GM10248 (cell line): ENCODE measurements at regions of chr19 and their contacts with region 1.

Region 1: DNA sequence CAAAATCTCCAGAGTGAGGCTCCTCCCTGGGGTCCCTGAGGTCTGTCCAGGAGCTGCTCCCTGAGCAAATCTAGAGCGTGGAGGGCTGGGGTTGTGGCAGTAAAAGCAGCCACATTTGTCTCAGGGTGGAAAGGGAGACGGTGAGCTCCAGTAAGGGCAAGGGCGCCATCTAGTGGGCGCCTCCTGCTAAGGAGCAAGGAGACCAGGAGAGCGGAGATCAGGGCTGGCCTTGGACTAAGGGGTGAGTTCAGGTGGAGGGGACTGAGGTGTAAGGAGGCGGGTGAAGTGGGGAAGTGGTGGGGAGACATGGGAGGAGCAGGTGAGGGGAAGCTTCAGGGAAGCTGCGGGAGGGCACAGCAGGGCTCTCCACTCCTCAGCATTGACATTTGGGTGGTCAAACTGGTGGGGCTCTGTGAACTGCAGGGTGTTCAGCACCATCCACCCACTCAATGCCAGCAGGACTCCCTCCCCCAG is 5.3 kb upstream of the CEACAM21 start:
- DNase-seq: peak; percentile 80
- CTCF ChIP-seq: peak; percentile 95

Region 2: GRCh38 chr19:41439441-41440222 is 131.0 kb before region 1 on chr19 and contains the start of gene DMAC2:
- CTCF ChIA-PET with region 1: interaction called, 343 read pairs
- POLR2A ChIA-PET with region 1: no interaction called
- DNase-seq: peak; percentile 92
- CTCF ChIP-seq: peak; percentile 65

Region 3: GRCh38 chr19:41449079-41449864 is 121.4 kb before region 1 on chr19:
- CTCF ChIA-PET with region 1: interaction called, 343 read pairs
- POLR2A ChIA-PET with region 1: interaction called, 9 read pairs
- DNase-seq: peak; percentile 90
- CTCF ChIP-seq: peak; percentile 97

Region 4: DNA sequence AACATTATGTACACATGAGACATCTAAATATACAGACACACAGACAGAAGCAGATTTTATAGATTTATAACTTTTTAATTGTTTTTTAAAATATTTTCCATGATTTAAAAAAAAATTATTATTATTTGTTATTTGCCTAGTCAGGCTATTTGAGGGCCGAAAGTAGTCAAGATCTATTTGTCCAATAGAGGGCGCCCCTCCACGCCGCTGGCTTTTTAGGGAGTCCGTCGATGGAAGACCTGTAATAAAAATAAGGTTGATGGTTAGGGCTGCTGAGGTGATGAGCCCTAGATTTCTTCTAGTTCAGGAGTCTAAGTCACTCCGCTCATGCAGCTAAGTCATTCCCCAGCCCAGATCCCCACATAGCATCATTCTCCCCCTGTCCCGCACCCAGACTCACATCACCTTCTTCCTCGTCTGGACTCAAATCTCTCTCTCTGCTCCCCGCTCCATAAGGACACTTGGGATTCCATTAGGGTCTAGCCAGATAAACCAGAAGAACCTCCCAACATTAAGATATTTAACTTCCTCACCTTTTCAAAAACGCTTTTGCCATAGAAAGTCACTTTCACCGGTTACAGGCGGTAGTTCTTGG is 28.6 kb before region 1 on chr19:
- CTCF ChIA-PET with region 1: interaction called, 80 read pairs
- POLR2A ChIA-PET with region 1: no interaction called
- DNase-seq: no peak
- CTCF ChIP-seq: peak; percentile 62

Region 5: GRCh38 chr19:41548954-41549688 is 21.6 kb before region 1 on chr19:
- CTCF ChIA-PET with region 1: interaction called, 64 read pairs
- POLR2A ChIA-PET with region 1: interaction called, 7 read pairs
- DNase-seq: peak; percentile 65
- CTCF ChIP-seq: no peak

Region 6: DNA sequence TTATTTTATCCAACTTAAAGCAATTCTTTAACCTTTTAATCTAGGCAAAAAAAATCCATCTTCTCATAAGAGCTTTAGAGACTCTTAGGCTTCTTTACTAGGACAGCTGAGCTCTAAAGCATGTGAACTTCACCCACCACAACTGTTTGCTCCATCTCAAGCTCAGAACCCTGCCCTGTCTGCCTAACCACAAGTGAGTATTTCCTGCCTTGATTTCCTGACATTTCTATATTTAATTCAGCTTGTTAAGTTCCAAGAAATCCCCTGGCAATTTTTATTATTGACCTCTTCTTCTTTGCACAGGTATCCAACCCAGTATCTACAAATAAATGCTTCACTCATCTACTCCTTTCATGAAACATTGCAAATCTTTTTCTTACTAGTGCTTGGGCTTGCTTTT is 15.8 kb before region 1 on chr19:
- CTCF ChIA-PET with region 1: interaction called, 64 read pairs
- POLR2A ChIA-PET with region 1: interaction called, 7 read pairs
- DNase-seq: no peak
- CTCF ChIP-seq: no peak

Region 7: DNA sequence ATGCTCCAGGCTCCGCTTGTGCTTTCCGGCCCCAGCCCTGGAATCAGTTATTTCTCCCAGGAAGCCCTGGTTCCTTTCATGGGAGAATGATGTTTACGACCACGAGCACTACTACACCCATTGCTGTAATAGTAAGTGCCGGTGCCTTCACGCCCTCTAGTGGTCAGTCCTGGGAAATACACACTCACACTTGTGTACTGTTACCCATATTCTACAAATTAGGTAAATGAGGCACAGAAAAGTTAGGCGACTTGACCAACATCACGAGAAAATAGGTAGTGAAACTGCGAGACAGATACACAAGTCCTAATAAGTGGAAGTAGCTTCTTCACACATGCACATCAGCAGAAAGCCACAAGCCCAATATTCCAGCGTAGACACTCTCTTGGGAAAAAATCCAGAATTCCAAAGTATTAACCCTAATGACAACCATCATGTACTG is 26.9 kb after region 1 on chr19:
- CTCF ChIA-PET with region 1: interaction called, 47 read pairs
- POLR2A ChIA-PET with region 1: no interaction called
- DNase-seq: peak; percentile 82
- CTCF ChIP-seq: peak; percentile 94